BJ (cell line): ENCODE measurements at regions of chr5 and their contacts with region 1.

Region 1: GRCh38 chr5:7856855-7857254 is 5.9 kb upstream of the CFAP90 start:
- DNase-seq: no peak
- H3K4me3 ChIP-seq: no peak overlapping the region
- H3K27me3 ChIP-seq: no peaks in the 10 kb centered on the region
- CTCF ChIP-seq: peak; percentile 64

Region 2: GRCh38 chr5:7827610-7828009 is 29.2 kb before region 1 on chr5:
- CTCF ChIA-PET with region 1: no interaction called
- POLR2A ChIA-PET with region 1: no interaction called
- DNase-seq: no peak
- H3K4me3 ChIP-seq: no peak overlapping the region
- H3K27me3 ChIP-seq: no peaks in the 10 kb centered on the region
- CTCF ChIP-seq: peak; percentile 21; the same call in 1 of the 2 replicates

Region 3: DNA sequence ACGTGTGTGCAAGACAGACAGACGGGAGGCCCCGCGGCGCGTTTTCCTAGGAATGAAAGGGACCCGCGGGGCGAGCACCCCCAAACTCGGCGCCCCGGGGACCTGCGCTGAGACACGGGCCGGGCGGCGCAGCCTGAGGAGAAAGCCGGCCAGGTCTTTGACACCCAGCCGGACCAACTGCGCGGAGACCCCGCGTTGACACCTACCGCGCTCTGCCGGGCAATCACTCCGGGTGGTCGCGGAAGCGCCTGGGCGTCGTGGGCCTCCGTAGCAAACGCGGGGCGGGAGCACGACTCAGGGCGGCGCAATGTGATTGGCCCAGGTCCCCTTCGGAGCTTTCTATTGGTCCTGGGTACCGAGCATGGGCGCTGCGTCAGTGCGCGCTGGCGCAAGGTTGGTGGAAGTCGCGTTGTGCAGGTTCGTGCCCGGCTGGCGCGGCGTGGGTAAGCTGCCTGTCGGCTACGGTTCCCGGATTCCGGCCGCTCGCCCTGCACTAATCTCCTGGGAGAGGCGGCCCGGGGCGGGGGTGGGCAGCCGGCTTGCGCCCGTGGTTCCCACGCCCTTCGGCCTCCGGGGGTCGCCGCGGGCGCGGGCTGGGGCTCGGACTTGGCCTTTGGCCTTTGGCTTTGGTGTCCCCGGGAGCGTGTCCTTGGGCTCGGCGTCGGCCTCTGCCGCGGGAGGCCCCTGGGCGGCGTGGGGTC is 12.1 kb after region 1 on chr5 and contains the starts of genes FASTKD3 and MTRR:
- CTCF ChIA-PET with region 1: interaction called, 10 read pairs
- POLR2A ChIA-PET with region 1: no interaction called
- DNase-seq: peak; percentile 45
- H3K4me3 ChIP-seq: peak within 1 kb of the TSS; percentile 92
- H3K27me3 ChIP-seq: no peaks in the 10 kb centered on the region
- CTCF ChIP-seq: no peak
- polyA plus RNA-seq, gene FASTKD3: 5.6 and 9.2 TPM in 2 replicates
- polyA plus RNA-seq, gene MTRR: 58.6 and 65.4 TPM in 2 replicates